Activated naive CD4-positive, alpha-beta T cell treated with anti-CD3 and anti-CD28 coated beads, Interleukin-2, amount 10 ng/mL, durations not matched to agents 7 days and 5 days (primary cell): ENCODE measurements at regions of chr11 and their contacts with region 1.

Region 1: GRCh38 chr11:123054301-123055065 is 7.5 kb downstream of the HSPA8 start:
- DNase-seq: peak; percentile 39
- H3K4me3 Mint-ChIP-seq: no peak overlapping the region
- H3K27ac Mint-ChIP-seq: peak overlapping the region; percentile 80
- H3K4me1 Mint-ChIP-seq: peaks cover 49% of the 10 kb centered on the region
- H3K27me3 Mint-ChIP-seq: no peaks in the 10 kb centered on the region

Region 2: GRCh38 chr11:122863704-122864326 is 190.7 kb before region 1 on chr11:
- CTCF ChIA-PET with region 1: interaction called, 11 read pairs
- DNase-seq: peak; percentile 59
- H3K4me3 Mint-ChIP-seq: no peak overlapping the region
- H3K27ac Mint-ChIP-seq: no peak overlapping the region
- H3K4me1 Mint-ChIP-seq: no peaks in the 10 kb centered on the region
- H3K27me3 Mint-ChIP-seq: peaks cover 27% of the 10 kb centered on the region

Region 3: GRCh38 chr11:122954455-122954854 is 100.0 kb before region 1 on chr11:
- CTCF ChIA-PET with region 1: no interaction called
- DNase-seq: no peak
- H3K4me3 Mint-ChIP-seq: no peak overlapping the region
- H3K27ac Mint-ChIP-seq: no peak overlapping the region
- H3K4me1 Mint-ChIP-seq: no peaks in the 10 kb centered on the region
- H3K27me3 Mint-ChIP-seq: no peaks in the 10 kb centered on the region

Region 4: DNA sequence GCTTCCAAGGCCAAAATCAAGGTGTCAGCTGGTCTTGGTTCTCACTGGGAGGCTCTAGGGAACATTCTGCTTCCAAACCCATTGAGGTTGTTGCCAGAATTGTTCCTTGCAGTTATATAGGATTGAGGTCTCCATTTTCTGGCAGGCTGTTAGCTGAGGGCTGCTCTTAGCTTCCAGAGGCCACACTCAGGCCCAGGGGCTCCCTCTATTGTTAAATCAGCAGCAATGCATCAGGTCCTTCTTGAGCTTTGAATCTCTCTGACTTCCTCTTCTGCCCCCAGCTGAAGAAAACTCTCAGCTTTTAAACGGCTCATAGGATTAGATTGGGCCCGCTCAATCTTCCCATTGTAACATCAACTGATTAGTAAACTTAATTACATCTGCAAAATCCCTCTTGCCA is 33.5 kb before region 1 on chr11:
- CTCF ChIA-PET with region 1: interaction called, 78 read pairs
- DNase-seq: peak; percentile 37
- H3K4me3 Mint-ChIP-seq: no peak overlapping the region
- H3K27ac Mint-ChIP-seq: no peak overlapping the region
- H3K4me1 Mint-ChIP-seq: peaks cover 8% of the 10 kb centered on the region
- H3K27me3 Mint-ChIP-seq: peaks cover 40% of the 10 kb centered on the region

Region 5: DNA sequence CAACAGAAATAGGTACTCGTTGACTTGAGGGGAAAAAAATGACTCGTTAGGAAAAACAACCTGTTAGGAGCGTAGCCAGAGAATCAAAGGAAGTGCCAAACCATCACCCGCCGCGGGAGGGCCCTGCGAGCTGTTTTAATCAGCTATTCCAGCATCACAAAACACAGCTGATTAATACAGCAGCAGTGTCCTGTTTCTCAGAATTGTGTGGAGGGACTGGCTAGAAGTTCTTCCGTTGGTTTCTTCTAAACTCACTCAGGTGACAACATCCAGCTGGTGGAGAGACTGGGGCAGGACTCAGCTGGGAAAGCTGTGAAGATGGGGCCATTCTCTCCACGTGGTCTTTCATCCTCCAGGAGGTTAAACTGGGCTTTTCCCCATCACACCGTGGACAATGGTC is 20.6 kb before region 1 on chr11:
- CTCF ChIA-PET with region 1: interaction called, 13 read pairs
- DNase-seq: no peak
- H3K4me3 Mint-ChIP-seq: no peak overlapping the region
- H3K27ac Mint-ChIP-seq: no peak overlapping the region
- H3K4me1 Mint-ChIP-seq: no peaks in the 10 kb centered on the region
- H3K27me3 Mint-ChIP-seq: no peaks in the 10 kb centered on the region

Region 6: GRCh38 chr11:123103326-123103980 is 49.0 kb after region 1 on chr11:
- CTCF ChIA-PET with region 1: interaction called, 32 read pairs
- DNase-seq: peak; percentile 51
- H3K4me3 Mint-ChIP-seq: no peak overlapping the region
- H3K27ac Mint-ChIP-seq: peak overlapping the region; percentile 4
- H3K4me1 Mint-ChIP-seq: peaks cover 32% of the 10 kb centered on the region
- H3K27me3 Mint-ChIP-seq: peaks cover 7% of the 10 kb centered on the region

Region 7: GRCh38 chr11:123110356-123110755 is 55.9 kb after region 1 on chr11:
- CTCF ChIA-PET with region 1: interaction called, 32 read pairs
- DNase-seq: peak; percentile 25
- H3K4me3 Mint-ChIP-seq: no peak overlapping the region
- H3K27ac Mint-ChIP-seq: no peak overlapping the region
- H3K4me1 Mint-ChIP-seq: peaks cover 15% of the 10 kb centered on the region
- H3K27me3 Mint-ChIP-seq: peaks cover 20% of the 10 kb centered on the region